SK-N-SH (cell line): ENCODE measurements at regions of chr2 and their contacts with region 1.

Region 1: GRCh38 chr2:121633463-121633862 is 15.8 kb downstream of the CLASP1 start:
- DNase-seq: no peak
- H3K4me3 ChIP-seq: no peak overlapping the region
- H3K27ac ChIP-seq: no peak overlapping the region
- H3K4me1 ChIP-seq: peaks cover 0 to 11% of the 10 kb centered on the region in 2 experiments; a peak in 1 of 4 replicates
- H3K27me3 ChIP-seq: no peaks in the 10 kb centered on the region
- CTCF ChIP-seq: no peak
- EP300 ChIP-seq: no peak
- RAD21 ChIP-seq: no peak

Region 2: DNA sequence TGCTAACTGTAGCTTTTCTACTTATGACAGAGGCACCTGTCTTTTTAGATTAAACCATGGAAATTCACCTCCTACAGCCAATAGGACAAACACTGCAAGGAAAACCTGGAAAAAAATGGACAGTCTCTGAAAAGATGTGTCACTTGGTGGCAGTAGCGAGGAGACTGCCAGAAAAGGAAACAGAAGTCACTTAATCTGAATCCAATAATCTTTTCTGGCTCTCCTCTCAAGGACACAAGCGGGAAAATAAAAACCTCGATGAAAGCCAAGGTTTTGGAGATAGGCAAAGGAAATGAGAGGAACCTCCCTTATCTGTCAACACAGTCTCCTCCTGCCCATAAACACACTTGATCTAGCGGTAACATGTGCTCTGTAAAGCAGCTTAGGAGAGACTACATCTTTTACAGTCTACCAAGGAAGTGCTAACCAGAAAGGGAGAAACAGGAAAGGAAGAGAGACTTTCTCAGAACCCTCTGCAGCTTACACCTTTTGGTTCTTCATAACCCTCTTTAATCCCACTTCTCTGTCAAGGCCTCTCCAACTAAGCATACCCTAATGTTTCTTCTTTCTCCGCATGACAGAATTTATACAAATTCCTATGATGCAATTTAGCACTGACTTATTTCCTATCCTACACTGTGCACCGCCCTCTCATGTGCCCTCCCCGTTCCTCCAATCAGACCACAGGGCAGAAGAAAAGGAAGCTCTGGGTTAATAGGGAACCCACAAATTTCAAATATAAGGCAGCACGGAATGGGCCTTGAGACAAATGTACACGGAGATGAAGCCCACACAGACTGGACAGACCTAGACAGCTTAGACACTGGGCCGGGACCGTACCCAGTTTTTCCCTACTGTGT is 37.0 kb before region 1 on chr2:
- CTCF ChIA-PET with region 1: interaction called, 3 read pairs
- POLR2A ChIA-PET with region 1: interaction called, 13 read pairs
- DNase-seq: peak; percentile 50
- H3K4me3 ChIP-seq: no peak overlapping the region; a peak in 1 of 4 replicates
- H3K27ac ChIP-seq: peak overlapping the region; percentile 33 to 80
- H3K4me1 ChIP-seq: peaks cover 5 to 18% of the 10 kb centered on the region in 2 experiments; a peak in 3 of 4 replicates
- H3K27me3 ChIP-seq: no peaks in the 10 kb centered on the region
- CTCF ChIP-seq: peak; percentile 61
- EP300 ChIP-seq: no peak
- RAD21 ChIP-seq: peak; percentile 71